RWPE1 (cell line): ENCODE measurements at regions of chr20 and their contacts with region 1.

Region 1: DNA sequence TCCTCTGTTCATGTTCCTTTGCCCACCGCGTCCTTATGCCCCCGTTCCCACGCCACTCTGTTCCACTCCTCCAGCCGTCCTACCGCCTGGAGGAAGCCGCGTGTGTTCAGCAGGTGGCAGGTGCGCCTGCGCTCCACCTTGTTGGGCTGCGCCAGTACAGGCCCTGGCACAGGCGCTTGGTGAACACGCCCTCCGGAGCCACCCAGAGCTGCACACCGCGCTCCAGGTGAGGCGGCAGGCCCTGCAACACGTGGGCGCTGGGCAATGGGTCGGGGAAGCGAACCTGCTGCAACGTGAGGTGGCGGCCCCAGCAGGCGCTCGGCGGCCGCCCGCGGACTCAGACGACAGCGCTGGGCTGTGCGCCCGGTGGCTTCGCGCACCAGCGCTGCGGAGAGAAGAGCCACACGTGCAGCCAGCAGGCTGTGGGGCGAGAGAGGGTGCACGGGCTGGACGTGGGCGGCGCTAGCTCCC is 4.1 kb upstream of the FOXS1 start:
- DNase-seq: no peak
- H3K27ac ChIP-seq: no peak overlapping the region
- CTCF ChIP-seq: no peak

Region 2: GRCh38 chr20:31572701-31573554 is 276.6 kb before region 1 on chr20:
- CTCF ChIA-PET with region 1: no interaction called
- POLR2A ChIA-PET with region 1: no interaction called
- DNase-seq: peak; percentile 99
- H3K27ac ChIP-seq: peak overlapping the region; percentile 93
- CTCF ChIP-seq: no peak

Region 3: DNA sequence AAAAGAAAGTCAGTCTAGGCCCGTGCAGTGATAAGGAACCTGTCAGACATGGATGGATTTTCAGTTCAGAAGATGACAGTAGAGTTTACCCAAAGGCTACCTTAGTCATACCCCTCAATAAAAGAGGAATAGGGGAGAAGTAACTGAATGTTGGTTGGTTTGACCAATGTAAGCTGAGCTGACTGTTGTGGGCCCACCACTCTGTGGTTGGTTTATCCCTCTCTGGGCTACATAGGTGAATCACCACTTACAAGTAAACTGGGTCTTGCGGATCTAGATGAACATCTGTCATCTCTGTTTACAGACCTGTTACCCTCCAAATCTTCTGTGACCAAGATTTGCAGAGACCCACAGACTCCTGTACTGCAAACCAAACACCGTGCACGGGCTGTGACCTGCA is 67.5 kb before region 1 on chr20:
- CTCF ChIA-PET with region 1: no interaction called
- POLR2A ChIA-PET with region 1: no interaction called
- DNase-seq: no peak
- H3K27ac ChIP-seq: no peak overlapping the region
- CTCF ChIP-seq: no peak

Region 4: DNA sequence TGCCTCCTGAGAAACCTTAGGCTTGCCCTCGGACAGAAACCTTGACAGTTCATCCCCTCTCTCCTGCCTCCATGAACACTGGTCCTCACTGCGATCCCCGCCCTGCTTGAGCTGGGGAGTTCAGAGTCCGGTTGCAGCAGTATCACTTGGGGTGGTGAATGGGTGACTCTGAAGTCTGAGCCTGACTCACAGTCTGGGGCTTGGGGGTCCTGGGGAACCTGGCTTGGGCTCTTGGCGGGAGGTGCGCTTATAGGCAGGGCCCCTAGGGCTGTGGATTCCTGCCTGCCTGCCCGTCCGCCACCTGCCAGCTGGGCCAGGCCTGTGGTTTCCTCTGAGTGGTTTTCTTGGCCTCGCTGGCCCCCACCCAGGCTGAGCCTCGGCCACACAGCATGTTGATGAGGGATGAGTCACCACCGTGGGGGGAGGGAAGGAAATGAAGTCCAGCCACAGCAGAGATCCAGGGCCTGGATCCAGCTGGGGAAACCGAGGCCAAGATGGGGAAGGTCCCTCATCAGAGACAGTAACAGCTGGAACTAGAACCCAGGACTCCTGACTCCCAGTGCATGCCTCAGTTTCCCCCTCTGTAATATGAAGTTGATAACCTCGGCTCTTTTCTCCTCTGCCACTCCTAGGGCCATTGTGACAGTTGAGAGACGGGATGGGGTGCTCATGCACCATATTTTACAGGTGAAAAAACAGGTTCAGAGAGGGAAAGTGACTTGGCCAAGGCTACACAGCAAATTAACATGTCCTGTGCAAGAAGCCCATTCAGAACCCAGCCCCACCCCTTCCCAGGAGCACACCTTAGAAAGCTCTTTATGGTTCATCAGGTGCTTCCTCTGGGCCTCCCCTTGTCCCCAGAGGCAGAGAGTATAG is 13.3 kb before region 1 on chr20:
- CTCF ChIA-PET with region 1: interaction called, 35 read pairs
- POLR2A ChIA-PET with region 1: no interaction called
- DNase-seq: peak; percentile 97
- H3K27ac ChIP-seq: peak overlapping the region; percentile 44
- CTCF ChIP-seq: no peak

Region 5: GRCh38 chr20:31860710-31861345 is 11.3 kb after region 1 on chr20:
- CTCF ChIA-PET with region 1: interaction called, 18 read pairs
- POLR2A ChIA-PET with region 1: no interaction called
- DNase-seq: no peak
- H3K27ac ChIP-seq: no peak overlapping the region
- CTCF ChIP-seq: no peak

Region 6: GRCh38 chr20:31869942-31870725 is 20.6 kb after region 1 on chr20 and contains the starts of genes DUSP15 and TTLL9:
- CTCF ChIA-PET with region 1: interaction called, 16 read pairs
- POLR2A ChIA-PET with region 1: no interaction called
- DNase-seq: no peak
- H3K27ac ChIP-seq: no peak within 1 kb of the TSS
- CTCF ChIP-seq: no peak

Region 7: GRCh38 chr20:31894980-31895675 is 45.6 kb after region 1 on chr20:
- CTCF ChIA-PET with region 1: interaction called, 10 read pairs
- POLR2A ChIA-PET with region 1: no interaction called
- DNase-seq: peak; percentile 72
- H3K27ac ChIP-seq: no peak overlapping the region
- CTCF ChIP-seq: no peak

Region 8: GRCh38 chr20:31951530-31952453 is 102.3 kb after region 1 on chr20 and contains the start of gene PDRG1:
- CTCF ChIA-PET with region 1: interaction called, 73 read pairs
- POLR2A ChIA-PET with region 1: interaction called, 7 read pairs
- DNase-seq: peak; percentile 98
- H3K27ac ChIP-seq: peak within 1 kb of the TSS; percentile 61
- CTCF ChIP-seq: peak; percentile 100

Region 9: GRCh38 chr20:32024683-32025295 is 175.3 kb after region 1 on chr20:
- CTCF ChIA-PET with region 1: interaction called, 69 read pairs
- POLR2A ChIA-PET with region 1: no interaction called
- DNase-seq: no peak
- H3K27ac ChIP-seq: no peak overlapping the region
- CTCF ChIP-seq: no peak

Region 10: DNA sequence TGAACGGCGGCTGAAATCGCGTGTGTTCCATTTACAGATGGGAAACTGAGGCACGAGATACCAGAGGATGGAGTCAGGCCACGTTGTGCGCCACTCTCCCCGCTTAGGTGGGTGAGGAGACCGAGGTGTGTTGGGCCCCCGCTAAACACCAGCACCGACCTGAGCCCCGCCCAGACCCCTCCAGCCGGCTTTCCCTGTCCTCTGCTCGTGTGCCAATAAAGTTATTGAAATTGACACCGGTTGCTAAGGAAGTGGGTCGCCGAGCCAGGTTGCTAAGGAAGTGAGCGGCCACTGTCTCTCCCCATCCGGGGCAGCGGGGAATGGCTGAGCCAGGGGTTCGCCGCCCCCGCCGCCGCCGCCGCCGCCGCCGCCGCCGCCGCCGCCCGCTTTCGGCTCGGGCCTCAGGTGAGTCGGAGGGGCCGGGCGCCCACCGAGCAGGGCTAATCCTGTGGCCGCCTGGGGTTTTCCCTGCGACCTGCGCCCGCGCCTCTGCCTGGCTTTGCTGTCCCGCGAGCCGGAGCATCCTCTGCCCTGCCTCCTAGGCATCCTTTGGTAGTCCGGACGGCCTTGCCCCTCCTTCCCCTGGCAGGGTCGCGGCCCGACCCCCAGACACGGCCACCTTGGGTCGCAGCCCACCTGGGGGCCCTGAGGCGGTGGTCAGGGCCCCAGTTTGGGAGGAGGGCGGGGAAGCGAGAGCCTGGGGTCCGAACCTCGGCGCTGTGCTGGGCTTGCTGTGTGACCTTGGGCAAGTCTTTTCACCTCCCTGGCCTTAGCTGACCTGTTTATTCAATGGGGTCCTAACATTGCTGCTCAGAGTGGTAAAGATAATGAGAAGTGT is 428.1 kb after region 1 on chr20 and contains the start of gene KIF3B:
- CTCF ChIA-PET with region 1: no interaction called
- POLR2A ChIA-PET with region 1: no interaction called
- DNase-seq: peak; percentile 99
- H3K27ac ChIP-seq: peak within 1 kb of the TSS; percentile 69
- CTCF ChIP-seq: no peak

Region 11: DNA sequence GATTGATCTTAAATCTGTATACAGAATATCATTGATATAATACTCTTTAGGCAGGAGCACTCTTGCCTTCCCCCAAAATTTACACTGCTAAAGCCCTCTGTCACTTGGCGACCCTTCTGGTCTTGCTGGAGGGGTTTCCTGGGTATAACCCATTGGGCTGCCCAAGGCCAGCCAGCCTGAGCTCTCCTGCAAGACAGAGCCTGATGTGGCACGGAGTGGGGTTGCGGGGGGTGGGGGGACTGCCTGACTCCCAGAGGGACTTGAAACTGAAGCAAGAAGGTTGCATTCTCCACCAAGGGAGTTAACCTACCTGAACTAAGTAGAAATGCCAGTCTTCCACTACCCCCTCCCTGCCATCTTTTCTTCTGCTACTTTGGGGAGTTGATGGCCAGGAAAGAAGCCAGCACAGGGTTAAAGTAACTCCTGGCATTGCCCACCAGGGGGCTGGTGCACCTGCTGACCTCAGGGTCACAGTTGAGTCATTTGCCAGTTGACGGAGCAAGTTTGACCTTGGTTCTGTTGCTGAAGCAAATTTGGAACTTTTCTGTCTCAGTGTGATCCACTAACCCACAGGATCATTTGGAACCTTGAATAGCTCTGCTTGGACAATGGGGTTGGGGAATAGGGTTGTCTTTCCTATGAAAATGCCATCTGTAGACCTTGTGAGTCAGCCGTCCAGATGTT is 588.0 kb after region 1 on chr20:
- CTCF ChIA-PET with region 1: no interaction called
- POLR2A ChIA-PET with region 1: no interaction called
- DNase-seq: peak; percentile 49
- H3K27ac ChIP-seq: no peak overlapping the region
- CTCF ChIP-seq: no peak